ENCODE measurements at regions of chr14 and their contacts with region 1.

Region 1: DNA sequence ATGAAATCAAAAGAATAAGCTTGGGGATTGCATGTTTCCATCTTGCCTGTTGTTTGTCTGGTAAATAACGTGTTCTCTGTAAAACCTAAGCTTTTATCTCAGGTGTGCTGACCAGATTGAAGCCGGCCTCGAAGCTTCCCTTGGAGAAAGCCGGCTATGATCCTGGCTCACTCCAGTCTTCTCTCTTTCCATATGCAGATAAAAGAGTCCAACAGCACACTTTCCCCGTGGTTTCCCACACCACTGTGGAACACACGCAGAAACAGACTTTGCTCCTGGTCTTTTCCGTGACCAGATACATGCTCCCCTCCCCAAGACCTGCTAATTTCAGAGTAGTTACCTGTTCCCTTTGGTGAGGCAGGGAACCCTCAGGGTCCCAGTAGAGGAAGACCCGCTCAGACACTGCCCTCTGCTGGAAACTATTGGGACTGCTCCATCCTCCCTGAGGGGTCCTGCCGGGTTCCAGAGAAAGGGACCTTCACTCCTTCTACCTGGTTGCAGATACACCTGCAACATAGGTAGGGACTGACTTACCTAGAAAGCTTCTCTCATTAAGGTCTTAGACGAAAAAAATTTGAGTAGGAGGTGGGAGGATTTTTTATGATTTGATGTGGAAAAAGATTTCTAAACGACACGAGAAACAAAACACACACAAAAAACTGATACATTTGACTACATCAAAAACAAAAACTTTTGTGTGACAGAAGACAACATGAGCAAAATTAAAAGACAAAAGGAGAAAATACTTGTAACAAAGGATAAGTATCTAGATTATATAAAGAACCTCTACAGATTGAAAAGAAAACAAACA is 415.5 kb upstream of the CCDC196 start:
- DNase-seq: peak; percentile 52 to 70 (median 53)
- H3K4me3 ChIP-seq: no peak overlapping the region
- H3K4me3 Mint-ChIP-seq: peak overlapping the region in 1 of 8 donors; percentile 27
- H3K27ac ChIP-seq: no peak overlapping the region
- H3K27ac Mint-ChIP-seq: peak overlapping the region in 3 of 7 donors; percentile 36 to 54 (median 37)
- H3K4me1 ChIP-seq: no peaks in the 10 kb centered on the region
- H3K4me1 Mint-ChIP-seq: peaks cover 3 to 6% (median 6%) of the 10 kb centered on the region in 4 donors
- H3K27me3 ChIP-seq: no peaks in the 10 kb centered on the region
- H3K27me3 Mint-ChIP-seq: peaks cover 0 to 4% of the 10 kb centered on the region in 2 donors

Region 2: DNA sequence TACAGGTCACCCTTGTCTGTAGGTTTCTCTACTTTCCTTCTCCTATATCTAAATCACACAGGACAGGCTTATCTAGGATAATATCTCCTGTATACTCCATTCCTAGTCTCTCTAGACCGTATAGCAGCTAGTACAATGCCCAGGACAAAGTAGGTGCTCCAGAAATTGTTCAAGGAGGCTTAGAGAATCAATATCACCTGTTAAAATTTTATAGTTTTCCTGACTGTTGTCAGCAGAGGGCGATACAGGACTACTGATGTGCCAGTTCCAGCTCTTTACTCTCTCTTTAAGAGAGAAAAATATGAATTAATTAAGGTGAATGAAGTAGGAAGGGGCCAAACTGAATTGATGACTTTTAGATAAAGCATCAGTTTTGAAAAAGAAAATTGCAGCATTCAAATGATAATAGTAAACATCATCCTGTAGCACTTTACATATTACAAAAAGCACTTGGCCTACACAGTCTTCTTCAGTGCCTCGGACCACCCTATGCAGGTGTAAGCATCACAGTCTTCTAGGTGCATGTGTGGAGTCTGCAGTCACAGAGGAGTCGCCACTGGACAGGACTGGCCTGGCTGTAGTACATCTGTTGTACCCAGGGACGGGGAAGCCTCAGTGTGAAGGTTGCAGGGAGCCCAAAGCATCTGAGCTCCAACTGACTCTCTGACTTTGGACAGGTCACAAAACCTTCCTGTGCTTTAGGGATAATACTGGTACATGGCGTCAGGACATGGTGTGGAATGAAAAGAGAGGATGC is 906.5 kb before region 1 on chr14:
- CTCF ChIA-PET with region 1: interaction called, 82 read pairs
- POLR2A ChIA-PET with region 1: no interaction called
- intact Hi-C with region 1: loop called (anchors 1 kb)
- DNase-seq: peak in 4 of 5 donors; percentile 57 to 64 (median 59)
- H3K4me3 ChIP-seq: no peak overlapping the region
- H3K4me3 Mint-ChIP-seq: no peak overlapping the region
- H3K27ac ChIP-seq: no peak overlapping the region
- H3K27ac Mint-ChIP-seq: no peak overlapping the region
- H3K4me1 ChIP-seq: no peaks in the 10 kb centered on the region
- H3K4me1 Mint-ChIP-seq: peaks cover 0 to 7% (median 5%) of the 10 kb centered on the region in 4 donors
- H3K27me3 ChIP-seq: no peaks in the 10 kb centered on the region
- H3K27me3 Mint-ChIP-seq: no peaks in the 10 kb centered on the region

Region 3: GRCh38 chr14:65222440-65222858 is 848.3 kb before region 1 on chr14:
- CTCF ChIA-PET with region 1: interaction called, 8 read pairs
- POLR2A ChIA-PET with region 1: no interaction called
- intact Hi-C with region 1: loop called (anchors 1 kb)
- DNase-seq: peak; percentile 45 to 55 (median 48)
- H3K4me3 ChIP-seq: no peak overlapping the region
- H3K4me3 Mint-ChIP-seq: peak overlapping the region in 1 of 8 donors; percentile 64
- H3K27ac ChIP-seq: no peak overlapping the region
- H3K27ac Mint-ChIP-seq: peak overlapping the region; percentile 0 to 83 (median 42)
- H3K4me1 ChIP-seq: peaks cover 34% of the 10 kb centered on the region
- H3K4me1 Mint-ChIP-seq: peaks cover 23 to 59% (median 38%) of the 10 kb centered on the region in 4 donors
- H3K27me3 ChIP-seq: no peaks in the 10 kb centered on the region
- H3K27me3 Mint-ChIP-seq: no peaks in the 10 kb centered on the region

Region 4: DNA sequence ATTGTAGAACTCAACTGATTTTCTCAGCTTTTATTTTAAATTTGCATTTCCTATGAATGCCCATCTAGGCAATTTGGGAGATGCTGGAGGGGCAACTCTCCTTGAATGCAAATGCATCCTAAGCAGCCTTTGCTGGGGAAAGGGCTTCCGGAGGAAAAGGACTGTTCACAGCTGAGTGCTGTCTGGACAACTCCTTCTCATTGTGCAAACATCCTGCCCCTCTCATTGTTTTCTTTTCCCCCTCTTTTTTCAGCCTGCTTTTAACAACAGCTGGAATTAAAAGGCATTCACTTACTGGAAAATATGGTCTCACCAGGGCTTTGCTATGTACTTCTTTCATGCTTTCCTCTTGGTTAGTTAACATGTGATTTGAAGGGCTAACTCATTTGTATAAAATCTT is 260.4 kb before region 1 on chr14:
- CTCF ChIA-PET with region 1: interaction called, 9 read pairs
- POLR2A ChIA-PET with region 1: no interaction called
- intact Hi-C with region 1: loop called (anchors 2 kb)
- DNase-seq: no peak
- H3K4me3 ChIP-seq: no peak overlapping the region
- H3K4me3 Mint-ChIP-seq: no peak overlapping the region
- H3K27ac ChIP-seq: no peak overlapping the region
- H3K27ac Mint-ChIP-seq: no peak overlapping the region
- H3K4me1 ChIP-seq: no peaks in the 10 kb centered on the region
- H3K4me1 Mint-ChIP-seq: peaks cover 0 to 5% (median 0%) of the 10 kb centered on the region in 4 donors
- H3K27me3 ChIP-seq: no peaks in the 10 kb centered on the region
- H3K27me3 Mint-ChIP-seq: no peaks in the 10 kb centered on the region

Region 5: GRCh38 chr14:66056926-66057552 is 13.7 kb before region 1 on chr14:
- CTCF ChIA-PET with region 1: interaction called, 22 read pairs
- POLR2A ChIA-PET with region 1: no interaction called
- intact Hi-C with region 1: no loop called
- DNase-seq: no peak
- H3K4me3 ChIP-seq: no peak overlapping the region
- H3K4me3 Mint-ChIP-seq: peak overlapping the region in 2 of 8 donors; percentile 15 to 62
- H3K27ac ChIP-seq: no peak overlapping the region
- H3K27ac Mint-ChIP-seq: peak overlapping the region in 1 of 7 donors; percentile 77
- H3K4me1 ChIP-seq: no peaks in the 10 kb centered on the region
- H3K4me1 Mint-ChIP-seq: peaks cover 0 to 17% (median under 1%) of the 10 kb centered on the region in 4 donors
- H3K27me3 ChIP-seq: no peaks in the 10 kb centered on the region
- H3K27me3 Mint-ChIP-seq: peaks cover 0 to 3% of the 10 kb centered on the region in 2 donors

Region 6: DNA sequence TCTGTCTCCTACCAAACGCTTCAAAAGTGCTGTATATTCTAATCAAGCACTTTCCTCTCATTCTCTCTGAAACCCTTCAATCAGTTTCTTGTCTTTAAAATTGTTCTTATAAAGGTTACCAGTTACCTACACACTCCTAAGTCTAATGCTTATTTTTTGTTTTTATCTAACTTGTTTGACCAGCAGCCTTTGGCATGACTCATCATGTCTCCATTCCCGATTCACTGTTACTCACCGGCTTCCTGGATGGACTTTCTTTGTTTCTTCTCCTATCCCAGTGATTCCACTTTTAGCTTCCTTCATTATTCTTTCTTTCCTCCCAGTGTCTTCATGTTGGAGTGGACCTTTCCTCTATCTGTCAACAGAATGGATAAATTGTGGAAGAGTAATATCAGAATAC is 46.9 kb after region 1 on chr14:
- CTCF ChIA-PET with region 1: no interaction called
- POLR2A ChIA-PET with region 1: no interaction called
- intact Hi-C with region 1: no loop called
- DNase-seq: no peak
- H3K4me3 ChIP-seq: no peak overlapping the region
- H3K4me3 Mint-ChIP-seq: peak overlapping the region in 1 of 8 donors; percentile 9
- H3K27ac ChIP-seq: no peak overlapping the region
- H3K27ac Mint-ChIP-seq: no peak overlapping the region
- H3K4me1 ChIP-seq: no peaks in the 10 kb centered on the region
- H3K4me1 Mint-ChIP-seq: no peaks in the 10 kb centered on the region
- H3K27me3 ChIP-seq: no peaks in the 10 kb centered on the region
- H3K27me3 Mint-ChIP-seq: peaks cover 3 to 7% of the 10 kb centered on the region in 2 donors

Region 7: GRCh38 chr14:66900719-66901118 is 830.0 kb after region 1 on chr14:
- CTCF ChIA-PET with region 1: no interaction called
- POLR2A ChIA-PET with region 1: no interaction called
- intact Hi-C with region 1: no loop called
- DNase-seq: no peak
- H3K4me3 ChIP-seq: no peak overlapping the region
- H3K4me3 Mint-ChIP-seq: no peak overlapping the region
- H3K27ac ChIP-seq: no peak overlapping the region
- H3K27ac Mint-ChIP-seq: no peak overlapping the region
- H3K4me1 ChIP-seq: no peaks in the 10 kb centered on the region
- H3K4me1 Mint-ChIP-seq: peaks cover 0 to 4% (median 2%) of the 10 kb centered on the region in 4 donors
- H3K27me3 ChIP-seq: no peaks in the 10 kb centered on the region
- H3K27me3 Mint-ChIP-seq: peaks cover 0 to 1% of the 10 kb centered on the region in 2 donors